ENCODE measurements at regions of chr3 and their contacts with region 1.

Region 1: DNA sequence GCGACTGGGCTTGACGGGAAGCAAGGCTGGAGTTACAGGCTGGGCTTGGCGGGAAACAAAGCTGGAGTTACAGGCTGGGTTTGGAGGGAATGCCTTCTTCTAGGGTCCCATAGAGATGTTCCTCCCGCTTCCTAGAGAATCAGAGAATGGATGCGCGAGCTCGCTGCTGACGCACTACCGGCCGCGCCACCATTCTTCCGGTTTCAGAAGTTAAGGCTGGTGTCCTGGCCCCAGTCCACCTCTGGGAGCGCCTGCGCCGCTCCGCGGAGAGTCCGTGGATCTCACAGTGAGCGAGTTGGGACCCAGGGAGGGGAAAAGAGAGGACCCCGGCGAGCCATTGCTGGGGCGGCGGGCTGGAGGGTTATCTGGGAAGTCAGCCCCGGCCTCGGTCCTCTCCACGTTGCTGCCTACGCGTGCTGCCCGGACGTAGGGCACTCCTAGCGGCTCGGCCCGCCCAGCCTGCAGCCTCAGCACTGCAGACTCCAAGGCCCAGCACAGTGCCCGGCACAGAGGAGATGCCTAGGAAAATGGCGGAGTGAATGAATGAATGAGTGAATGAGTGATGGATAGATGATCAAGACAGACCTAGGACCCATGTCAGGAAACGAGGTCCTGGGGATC is at the start of gene ZNF502:
- DNase-seq: peak; percentile 94
- total RNA-seq, gene ZNF502: 3.9 TPM

Region 2: GRCh38 chr3:44529927-44530326 is 182.6 kb before region 1 on chr3:
- intact Hi-C with region 1: loop called (anchors 10 kb)
- DNase-seq: no peak

Region 3: DNA sequence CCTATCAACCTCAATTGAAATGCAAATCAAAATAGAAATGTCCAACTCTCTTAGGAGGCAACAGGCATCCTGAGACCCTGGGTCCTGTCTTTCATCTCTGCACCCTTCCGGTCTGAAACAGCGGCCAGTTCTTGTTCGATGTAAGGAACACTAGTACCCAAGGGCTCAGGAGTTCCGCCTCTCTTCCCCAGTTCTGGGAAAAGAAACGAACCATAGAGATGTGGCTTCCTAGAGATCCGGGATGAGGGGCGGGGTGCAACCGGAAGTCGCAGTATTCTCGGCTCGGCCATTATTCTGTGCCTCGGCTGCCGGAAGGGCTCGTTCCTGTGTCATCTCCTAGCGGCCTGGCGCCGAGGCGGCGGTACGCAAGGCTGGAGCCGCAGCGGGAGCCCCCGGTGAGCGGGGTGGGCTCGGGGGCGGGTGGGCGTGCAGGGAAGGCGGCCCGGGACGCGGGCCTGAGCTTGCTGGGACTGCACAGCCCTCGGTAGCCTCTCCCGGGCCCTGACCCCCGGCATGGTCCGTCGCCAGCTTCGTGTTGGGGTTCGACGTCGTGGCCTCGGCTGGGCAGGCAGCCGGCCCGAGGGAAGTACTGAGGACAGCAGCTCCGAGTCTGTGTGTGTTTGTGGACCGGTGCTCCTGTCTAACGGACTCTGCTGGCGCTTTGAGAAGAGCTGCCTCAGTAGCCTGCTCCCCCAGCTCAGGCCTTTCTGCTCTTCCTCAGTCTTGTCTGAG is 87.7 kb before region 1 on chr3 and contains the start of gene ZNF197:
- intact Hi-C with region 1: loop called (anchors 5 kb)
- DNase-seq: peak; percentile 92
- total RNA-seq, gene ZNF197: 13.6 TPM

Region 4: DNA sequence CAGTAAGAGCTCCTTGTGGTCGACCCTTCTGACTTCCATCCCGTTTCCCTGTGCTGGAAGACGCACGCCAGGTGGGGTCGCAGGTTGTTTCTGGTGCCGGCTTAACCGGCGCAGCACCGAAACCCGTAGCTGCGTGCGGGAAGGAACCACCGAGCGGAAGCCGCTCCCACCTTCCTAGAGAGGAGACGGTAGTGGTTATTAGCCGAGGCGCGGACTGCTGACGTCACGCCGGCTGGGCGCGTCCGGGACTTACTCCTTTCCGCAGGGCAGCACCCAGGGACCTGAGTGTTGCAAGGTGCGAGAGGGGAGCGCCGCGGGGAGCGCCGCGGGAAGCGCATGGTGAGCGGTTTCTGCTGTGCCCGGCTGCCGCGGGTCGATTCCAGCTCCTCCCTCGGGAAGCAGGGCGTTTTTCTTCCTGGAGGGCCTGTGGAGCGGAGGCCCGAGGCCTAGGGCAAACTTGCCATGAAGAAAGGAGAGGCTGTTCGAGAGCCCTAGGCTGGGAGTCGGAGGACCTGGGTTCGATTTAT is 16.9 kb after region 1 on chr3 and contains the start of gene ZNF501:
- intact Hi-C with region 1: loop called (anchors 1 kb)
- DNase-seq: peak; percentile 97
- total RNA-seq, gene ZNF501: 4.4 TPM

Region 5: GRCh38 chr3:44761424-44762169 is 49.0 kb after region 1 on chr3 and contains the starts of genes KIAA1143 and KIF15:
- intact Hi-C with region 1: loop called (anchors 2 kb)
- DNase-seq: peak; percentile 98
- total RNA-seq, gene KIAA1143: 24.0 TPM
- total RNA-seq, gene KIF15: 0.30 TPM

Region 6: DNA sequence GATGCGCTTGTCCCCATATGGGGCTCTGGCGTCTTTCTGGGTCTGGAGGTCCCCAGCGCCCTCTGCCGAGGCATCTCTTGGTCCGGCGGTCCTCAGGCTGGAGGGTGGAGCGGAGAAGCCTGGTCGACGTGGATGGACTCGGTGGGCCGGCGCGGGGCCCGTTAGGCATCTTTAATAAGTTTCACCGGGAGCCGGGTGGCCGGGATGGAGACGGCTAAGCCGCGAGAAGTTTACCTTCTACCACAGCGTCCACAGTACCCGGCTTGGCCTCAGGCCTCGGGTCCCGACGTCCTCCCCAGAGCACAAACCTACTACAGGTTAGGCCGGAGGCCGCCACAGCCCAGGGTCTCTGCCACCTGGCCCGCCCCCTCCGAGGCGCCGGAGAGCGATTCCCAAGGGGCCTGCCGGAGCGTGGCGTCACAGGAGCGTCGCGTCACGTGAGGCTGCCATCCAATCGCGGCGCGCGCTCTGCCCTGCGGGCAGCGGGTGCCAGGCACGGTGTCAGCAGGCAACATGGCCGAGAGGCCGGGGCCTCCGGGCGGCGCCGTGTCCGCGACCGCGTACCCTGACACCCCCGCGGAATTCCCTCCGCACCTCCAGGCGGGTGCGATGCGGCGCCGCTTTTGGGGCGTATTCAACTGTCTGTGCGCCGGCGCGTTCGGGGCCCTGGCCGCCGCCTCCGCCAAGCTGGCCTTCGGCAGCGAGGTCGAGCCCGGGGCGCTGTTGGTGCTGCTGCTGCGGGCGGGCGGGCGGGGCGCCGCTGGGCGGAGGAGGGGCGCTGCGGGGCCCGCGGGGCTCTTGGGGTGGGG is 149.1 kb after region 1 on chr3 and contains the start of gene TMEM42:
- intact Hi-C with region 1: loop called (anchors 5 kb)
- DNase-seq: peak; percentile 96
- total RNA-seq, gene TMEM42: 10.5 TPM